ENCODE measurements at regions of chr18 and their contacts with region 1.

Region 1: DNA sequence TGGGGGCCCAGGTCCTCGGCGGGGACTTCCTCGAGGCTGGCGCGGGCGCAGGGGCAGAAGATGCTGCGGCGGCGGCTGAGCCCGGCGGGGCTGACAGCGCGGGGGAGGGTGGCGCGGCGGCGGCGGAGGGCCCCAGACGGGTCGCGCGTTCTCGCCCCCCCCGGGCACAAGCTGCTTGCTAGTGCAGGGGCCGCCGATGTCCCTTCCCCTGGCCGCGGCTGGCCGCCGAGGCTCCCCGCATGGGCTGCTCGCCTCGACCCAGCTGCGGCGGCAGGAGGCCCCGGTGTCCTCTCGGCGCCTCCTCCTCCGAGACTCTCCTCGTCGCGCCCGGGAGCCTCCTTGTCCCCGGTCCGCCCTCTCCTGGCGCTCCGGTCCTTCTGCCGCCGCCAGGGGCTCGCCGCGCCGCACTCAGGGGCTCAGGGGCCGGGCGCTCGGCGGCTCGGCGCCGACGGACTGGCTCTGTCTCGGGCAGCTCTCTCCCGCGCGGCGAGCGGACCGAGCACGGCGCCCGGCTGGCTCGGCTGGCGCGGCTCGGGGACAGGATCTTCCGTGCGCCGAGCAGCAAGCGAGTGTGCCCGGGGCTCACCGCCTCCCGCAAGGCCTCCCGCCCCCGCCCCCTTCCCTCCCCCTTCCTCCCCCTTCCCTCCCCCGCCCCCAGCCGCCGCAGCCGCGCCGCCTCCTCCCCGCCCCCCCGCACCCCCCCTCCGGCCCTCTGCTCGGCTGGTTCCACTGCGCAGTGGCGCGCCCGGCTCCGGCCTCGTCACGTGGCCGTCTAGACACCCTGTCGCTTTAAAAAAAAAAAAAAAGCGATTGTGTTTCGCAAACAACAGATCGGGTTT is 902 bp upstream of the SMAD7 start:
- DNase-seq: no peak
- H3K4me3 ChIP-seq: peak overlapping the region; percentile 72 to 89
- H3K27ac ChIP-seq: peak overlapping the region; percentile 98
- H3K4me1 ChIP-seq: peaks cover 53% of the 10 kb centered on the region
- H3K27me3 ChIP-seq: no peaks in the 10 kb centered on the region
- CTCF ChIP-seq: no peak
- POLR2A ChIP-seq: peak in 1 of 2 donors; percentile 84

Region 2: GRCh38 chr18:48295585-48296311 is 655.9 kb before region 1 on chr18:
- intact Hi-C with region 1: no loop called
- DNase-seq: peak in 1 of 2 donors; percentile 91
- H3K4me3 ChIP-seq: no peak overlapping the region
- H3K27ac ChIP-seq: no peak overlapping the region
- H3K4me1 ChIP-seq: peaks cover 9% of the 10 kb centered on the region
- H3K27me3 ChIP-seq: no peaks in the 10 kb centered on the region
- CTCF ChIP-seq: no peak
- POLR2A ChIP-seq: no peak

Region 3: DNA sequence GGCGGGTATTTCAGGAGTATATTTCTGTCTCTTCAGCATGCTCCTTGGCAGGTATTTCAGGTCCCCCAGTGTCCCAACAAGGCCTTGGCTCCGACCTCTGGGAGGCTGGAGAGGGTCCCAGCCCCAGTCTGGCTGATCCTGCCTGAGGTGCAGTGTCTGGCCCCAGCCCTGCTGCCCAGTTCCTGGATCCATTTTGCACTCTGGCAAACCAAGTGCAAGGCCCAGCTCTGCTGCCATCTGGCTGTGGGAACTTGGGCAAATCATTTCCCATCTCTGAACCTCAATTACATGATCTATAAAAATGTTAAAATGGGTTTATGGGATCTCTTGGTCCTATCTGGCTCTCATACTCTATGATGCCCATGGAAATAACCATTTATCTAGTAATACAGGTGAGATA is 606.1 kb before region 1 on chr18:
- intact Hi-C with region 1: no loop called
- DNase-seq: no peak
- H3K4me3 ChIP-seq: no peak overlapping the region
- H3K27ac ChIP-seq: no peak overlapping the region
- H3K4me1 ChIP-seq: no peaks in the 10 kb centered on the region
- H3K27me3 ChIP-seq: no peaks in the 10 kb centered on the region
- CTCF ChIP-seq: peak in 1 of 3 experiments; percentile 16
- POLR2A ChIP-seq: no peak

Region 4: GRCh38 chr18:48680339-48681221 is 271.1 kb before region 1 on chr18:
- intact Hi-C with region 1: loop called (anchors 10 kb)
- DNase-seq: no peak
- H3K4me3 ChIP-seq: no peak overlapping the region
- H3K27ac ChIP-seq: no peak overlapping the region
- H3K4me1 ChIP-seq: peaks cover 13% of the 10 kb centered on the region
- H3K27me3 ChIP-seq: no peaks in the 10 kb centered on the region
- CTCF ChIP-seq: peak in 1 of 3 experiments; percentile 9
- POLR2A ChIP-seq: no peak

Region 5: GRCh38 chr18:48992699-48993555 is 41.3 kb after region 1 on chr18:
- intact Hi-C with region 1: loop called (anchors 5 kb)
- DNase-seq: no peak
- H3K4me3 ChIP-seq: no peak overlapping the region
- H3K27ac ChIP-seq: no peak overlapping the region
- H3K4me1 ChIP-seq: peaks cover 45% of the 10 kb centered on the region
- H3K27me3 ChIP-seq: no peaks in the 10 kb centered on the region
- CTCF ChIP-seq: no peak
- POLR2A ChIP-seq: no peak

Measured in vagina (tissue), 2 donors.